ENCODE measurements at regions of chr2 and their contacts with region 1.

Region 1: DNA sequence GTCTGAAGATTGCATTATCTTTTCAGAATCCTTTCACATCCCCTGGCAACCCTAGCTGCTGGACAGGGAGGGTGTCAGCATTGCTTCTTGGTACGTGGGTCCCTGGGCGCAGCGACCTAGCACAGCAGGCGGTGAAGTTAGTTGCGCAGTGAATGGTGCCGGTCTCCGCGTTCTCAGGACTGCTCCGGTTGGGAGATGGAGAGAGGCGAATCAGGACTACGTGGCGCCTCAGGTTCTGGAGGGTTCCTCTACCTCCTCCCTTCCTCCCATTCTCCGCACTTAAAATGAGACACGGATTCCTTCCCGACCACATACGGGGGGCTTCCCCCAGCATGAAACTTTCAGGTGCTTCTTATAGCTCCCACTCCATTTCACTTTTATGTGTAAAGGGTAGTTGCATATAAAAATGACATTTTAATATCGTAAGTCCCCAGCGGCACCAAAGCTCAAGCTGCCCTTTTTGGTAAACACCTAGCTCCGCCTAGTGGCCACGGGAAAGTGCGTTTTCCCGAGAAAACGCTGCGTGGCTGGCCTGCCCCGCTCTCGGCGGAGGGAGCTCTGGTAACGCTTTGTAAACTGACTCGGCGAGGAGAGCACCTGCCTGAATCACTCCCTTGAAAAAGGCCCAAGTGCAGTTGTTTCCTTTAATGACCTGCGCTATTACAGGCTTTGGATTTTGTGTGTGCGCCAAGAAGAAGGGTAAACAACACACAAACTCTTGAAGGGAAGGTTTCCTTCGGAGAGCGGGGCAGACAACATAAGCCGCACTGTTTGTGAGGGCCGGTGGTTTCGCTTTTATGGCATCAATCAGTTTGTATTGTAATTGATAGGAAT is 32.9 kb upstream of the INHBB start:
- DNase-seq: peak; percentile 23
- ATAC-seq: peak; percentile 72
- H3K4me3 ChIP-seq: peak overlapping the region; percentile 47; the same call in 1 of the 2 replicates
- H3K27ac ChIP-seq: no peak overlapping the region
- H3K4me1 ChIP-seq: peaks cover 24% of the 10 kb centered on the region
- H3K27me3 ChIP-seq: 0 out of 4 replicates have a peak, but pooled peaks cover 0 to 1% of the 10 kb centered on the region in 2 experiments
- CTCF ChIP-seq: peak; percentile 93 to 97 (median 96)
- EP300 ChIP-seq: no peak
- POLR2A ChIP-seq: no peak
- RAD21 ChIP-seq: peak; percentile 95

Region 2: DNA sequence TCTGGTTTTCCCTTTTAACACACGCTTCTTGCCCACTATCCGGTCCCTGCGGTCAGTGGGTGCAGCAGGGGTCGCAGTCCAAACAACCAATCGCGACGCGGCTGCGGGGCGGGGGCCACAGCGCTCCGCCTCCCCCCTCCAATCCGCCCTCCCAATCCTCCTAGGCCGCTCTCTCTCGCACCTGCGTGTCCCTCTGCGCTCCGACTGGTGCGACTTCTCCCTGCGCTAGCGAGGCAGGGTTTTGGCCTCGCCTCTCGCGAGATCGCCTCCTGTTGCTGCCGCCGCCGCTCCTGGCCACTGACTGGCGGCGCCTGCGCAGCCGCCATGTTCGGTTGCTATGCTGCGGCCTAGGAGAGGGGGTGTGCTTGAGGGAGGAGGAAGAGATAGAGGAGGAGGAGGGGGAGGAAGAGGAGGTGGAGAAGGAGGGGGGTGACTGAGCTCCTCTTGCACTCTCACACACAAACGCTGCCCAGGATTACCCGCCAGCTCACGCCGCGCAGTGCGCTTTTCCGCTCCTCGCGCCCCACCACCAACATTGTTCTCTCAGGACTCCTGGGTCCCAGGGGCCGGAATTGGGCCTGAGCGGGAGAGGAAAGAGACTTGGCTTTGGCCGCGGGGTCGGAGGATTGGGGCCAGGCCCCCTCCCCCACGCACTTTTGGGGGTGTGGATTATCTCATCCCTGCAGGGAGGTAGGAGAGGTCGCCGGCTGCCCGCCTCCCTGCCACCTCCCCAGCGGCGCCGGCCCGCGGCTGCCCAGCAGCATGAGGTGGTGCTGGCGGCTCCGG is 553.4 kb before region 1 on chr2 and contains the start of gene PTPN4:
- CTCF ChIA-PET with region 1: interaction called, 4 read pairs
- POLR2A ChIA-PET with region 1: no interaction called
- RAD21 ChIA-PET with region 1: no interaction called
- SMC1A ChIA-PET with region 1: interaction called, 6 read pairs
- in situ Hi-C with region 1: no loop called
- intact Hi-C with region 1: loop called (anchors 10 kb)
- DNase-seq: peak; percentile 95
- ATAC-seq: peak; percentile 93
- H3K4me3 ChIP-seq: peak within 1 kb of the TSS; percentile 98
- H3K27ac ChIP-seq: peak within 1 kb of the TSS; percentile 85
- H3K4me1 ChIP-seq: no peaks in the 10 kb centered on the region
- H3K27me3 ChIP-seq: no peaks in the 10 kb centered on the region; a peak in 1 of 4 replicates
- CTCF ChIP-seq: no peak; a peak in 1 of 6 replicates
- EP300 ChIP-seq: peak in 1 of 2 experiments; percentile 21; a peak in 1 of 4 replicates
- POLR2A ChIP-seq: peak; percentile 94
- RAD21 ChIP-seq: 0 out of 2 replicates have a peak, but pooled peaks have one; percentile 3
- polyA plus RNA-seq, gene PTPN4: 5.0 to 7.4 TPM

Region 3: DNA sequence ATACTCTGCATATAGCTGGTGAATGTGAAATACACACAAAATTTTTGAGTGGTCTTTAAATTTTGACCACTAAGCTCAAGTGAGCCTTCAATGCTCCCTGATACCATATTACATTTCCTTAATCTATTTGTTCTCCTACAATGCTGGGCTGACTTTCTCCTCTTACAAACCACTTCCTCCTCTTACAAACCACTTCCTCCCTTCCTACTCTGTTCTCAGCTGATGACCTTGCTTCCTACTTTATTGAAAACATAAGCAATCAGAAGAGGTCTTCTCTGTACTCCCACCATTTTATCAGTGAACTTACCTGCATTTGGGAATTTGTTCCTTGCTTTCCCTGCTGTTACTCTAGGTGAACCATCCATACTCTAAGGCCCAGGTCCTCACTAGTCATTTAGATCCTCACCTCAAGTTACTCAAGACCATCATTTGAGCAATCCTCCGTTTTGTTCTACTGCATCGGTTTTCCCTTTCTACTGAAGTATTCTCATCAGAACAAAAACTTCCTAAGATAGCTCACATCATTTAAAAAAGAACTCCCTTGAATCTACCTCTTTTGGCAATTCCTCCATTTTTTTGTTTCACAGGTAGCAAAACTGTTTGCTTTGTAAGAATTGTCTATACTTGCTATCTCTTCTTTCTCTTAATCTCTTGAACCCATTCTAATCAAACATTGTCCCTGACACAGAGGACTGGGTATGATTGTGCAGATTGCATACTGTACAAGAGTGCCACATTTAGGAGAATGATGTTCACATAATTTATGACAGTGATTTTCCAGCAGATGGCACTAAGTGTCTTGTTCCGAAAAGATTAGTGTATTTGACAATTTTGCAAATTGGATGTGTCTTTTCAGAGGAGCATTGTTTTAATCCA is 203.7 kb before region 1 on chr2:
- CTCF ChIA-PET with region 1: interaction called, 40 read pairs
- POLR2A ChIA-PET with region 1: no interaction called
- RAD21 ChIA-PET with region 1: interaction called, 12 read pairs
- SMC1A ChIA-PET with region 1: interaction called, 26 read pairs
- in situ Hi-C with region 1: loop called (anchors 10 kb)
- intact Hi-C with region 1: loop called (anchors 5 kb)
- DNase-seq: peak; percentile 19
- ATAC-seq: peak; percentile 71
- H3K4me3 ChIP-seq: no peak overlapping the region
- H3K27ac ChIP-seq: no peak overlapping the region
- H3K4me1 ChIP-seq: peaks cover 7% of the 10 kb centered on the region
- H3K27me3 ChIP-seq: no peaks in the 10 kb centered on the region
- CTCF ChIP-seq: peak; percentile 28 to 55 (median 46); a peak in 5 of 6 replicates
- EP300 ChIP-seq: no peak
- POLR2A ChIP-seq: no peak
- RAD21 ChIP-seq: peak; percentile 67

Region 4: GRCh38 chr2:120223034-120223912 is 89.8 kb before region 1 on chr2 and contains the start of gene TMEM185B:
- CTCF ChIA-PET with region 1: interaction called, 48 read pairs
- POLR2A ChIA-PET with region 1: interaction called, 4 read pairs
- RAD21 ChIA-PET with region 1: interaction called, 19 read pairs
- SMC1A ChIA-PET with region 1: interaction called, 106 read pairs
- in situ Hi-C with region 1: no loop called
- intact Hi-C with region 1: loop called (anchors 2 kb)
- DNase-seq: no peak
- ATAC-seq: peak; percentile 94
- H3K4me3 ChIP-seq: peak within 1 kb of the TSS; percentile 81
- H3K27ac ChIP-seq: peak within 1 kb of the TSS; percentile 83
- H3K4me1 ChIP-seq: peaks cover 22% of the 10 kb centered on the region
- H3K27me3 ChIP-seq: no peaks in the 10 kb centered on the region
- CTCF ChIP-seq: peak; percentile 24 to 50 (median 30); a peak in 5 of 6 replicates
- EP300 ChIP-seq: peak in 1 of 2 experiments; percentile 45; a peak in 1 of 4 replicates
- POLR2A ChIP-seq: peak; percentile 94
- RAD21 ChIP-seq: peak; percentile 33; the same call in 1 of the 2 replicates
- polyA plus RNA-seq, gene TMEM185B: 2.4 to 3.2 TPM

Region 5: GRCh38 chr2:120252225-120253021 is 60.7 kb before region 1 on chr2 and contains the start of gene RALB:
- CTCF ChIA-PET with region 1: interaction called, 33 read pairs
- POLR2A ChIA-PET with region 1: interaction called, 3 read pairs
- RAD21 ChIA-PET with region 1: interaction called, 53 read pairs
- SMC1A ChIA-PET with region 1: interaction called, 6 read pairs
- in situ Hi-C with region 1: no loop called
- intact Hi-C with region 1: loop called (anchors 2 kb)
- DNase-seq: peak; percentile 87
- ATAC-seq: peak; percentile 96
- H3K4me3 ChIP-seq: peak within 1 kb of the TSS; percentile 91
- H3K27ac ChIP-seq: peak within 1 kb of the TSS; percentile 51
- H3K4me1 ChIP-seq: peaks cover 7% of the 10 kb centered on the region; the same call in 1 of the 2 replicates
- H3K27me3 ChIP-seq: no peaks in the 10 kb centered on the region
- CTCF ChIP-seq: no peak
- EP300 ChIP-seq: no peak
- POLR2A ChIP-seq: peak; percentile 79
- RAD21 ChIP-seq: no peak
- polyA plus RNA-seq, gene RALB: 8.3 to 15.9 TPM

Region 6: GRCh38 chr2:120287183-120288015 is 25.7 kb before region 1 on chr2:
- CTCF ChIA-PET with region 1: interaction called, 12 read pairs
- POLR2A ChIA-PET with region 1: no interaction called
- RAD21 ChIA-PET with region 1: interaction called, 10 read pairs
- SMC1A ChIA-PET with region 1: interaction called, 7 read pairs
- in situ Hi-C with region 1: no loop called
- intact Hi-C with region 1: loop called (anchors 1 kb)
- DNase-seq: peak; percentile 80
- ATAC-seq: peak; percentile 98
- H3K4me3 ChIP-seq: peak overlapping the region; percentile 42
- H3K27ac ChIP-seq: peak overlapping the region; percentile 98
- H3K4me1 ChIP-seq: peaks cover 17% of the 10 kb centered on the region
- H3K27me3 ChIP-seq: no peaks in the 10 kb centered on the region
- CTCF ChIP-seq: no peak
- EP300 ChIP-seq: peak; percentile 78 to 92
- POLR2A ChIP-seq: peak; percentile 58
- RAD21 ChIP-seq: no peak; the same call in 1 of the 2 replicates

Region 7: GRCh38 chr2:120680136-120680761 is 367.2 kb after region 1 on chr2:
- CTCF ChIA-PET with region 1: interaction called, 10 read pairs
- POLR2A ChIA-PET with region 1: no interaction called
- RAD21 ChIA-PET with region 1: interaction called, 5 read pairs
- SMC1A ChIA-PET with region 1: interaction called, 5 read pairs
- in situ Hi-C with region 1: no loop called
- intact Hi-C with region 1: no loop called
- DNase-seq: peak; percentile 8
- ATAC-seq: peak; percentile 95
- H3K4me3 ChIP-seq: no peak overlapping the region
- H3K27ac ChIP-seq: no peak overlapping the region
- H3K4me1 ChIP-seq: no peaks in the 10 kb centered on the region
- H3K27me3 ChIP-seq: peaks cover 0 to 2% of the 10 kb centered on the region in 2 experiments; a peak in 1 of 4 replicates
- CTCF ChIP-seq: peak; percentile 63 to 72 (median 66)
- EP300 ChIP-seq: no peak
- POLR2A ChIP-seq: no peak
- RAD21 ChIP-seq: peak; percentile 82

Measured in GM12878 (cell line).